CD4-positive, alpha-beta T cell (primary cell): ENCODE measurements at regions of chr13 and their contacts with region 1.

Region 1: DNA sequence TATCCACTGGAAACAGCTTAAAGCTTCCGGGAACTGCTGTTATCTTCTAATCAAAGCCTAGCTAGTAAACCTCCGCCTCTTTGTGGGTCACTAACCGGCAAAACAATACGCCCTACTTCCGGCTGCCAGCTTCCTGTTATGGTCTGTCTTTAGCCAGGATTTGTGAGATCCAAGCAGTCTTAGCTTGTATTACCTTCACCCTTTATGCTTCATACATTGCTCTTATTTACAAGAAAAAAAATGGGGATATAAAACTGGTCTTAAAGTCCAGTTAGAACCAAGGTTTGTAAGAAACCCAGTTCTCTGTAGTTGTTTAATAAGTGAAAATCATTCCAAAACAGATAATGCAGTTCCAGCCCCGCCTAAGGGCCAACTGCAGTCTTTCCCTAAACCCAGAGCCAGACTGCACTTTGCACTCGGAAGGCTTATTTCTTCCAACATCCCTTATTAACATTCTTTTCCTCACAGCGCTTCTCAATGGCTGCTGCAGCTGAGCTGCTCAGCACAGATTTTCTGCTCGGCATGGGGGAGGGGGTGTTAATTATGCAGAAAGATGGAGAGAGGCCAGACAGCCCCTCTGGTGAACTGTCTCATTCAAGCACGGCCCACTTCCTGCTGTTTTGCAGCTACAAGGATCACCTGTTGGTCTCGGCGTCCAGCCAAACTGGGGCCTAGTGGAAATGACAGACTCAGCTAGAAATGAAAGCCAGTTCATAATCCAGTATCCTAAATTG is 368.4 kb downstream of the KLF12 start:
- DNase-seq: peak; percentile 71 to 92 (median 89)
- ATAC-seq: peak; percentile 87
- H3K4me3 ChIP-seq: peak overlapping the region; percentile 33
- H3K4me3 Mint-ChIP-seq: peak overlapping the region; percentile 79
- H3K27ac ChIP-seq: peak overlapping the region; percentile 77 to 83
- H3K27ac Mint-ChIP-seq: peak overlapping the region; percentile 98
- H3K4me1 ChIP-seq: peaks cover 37% of the 10 kb centered on the region
- H3K4me1 Mint-ChIP-seq: peaks cover 82% of the 10 kb centered on the region
- H3K27me3 ChIP-seq: no peaks in the 10 kb centered on the region
- H3K27me3 Mint-ChIP-seq: no peaks in the 10 kb centered on the region
- CTCF ChIP-seq: no peak

Region 2: DNA sequence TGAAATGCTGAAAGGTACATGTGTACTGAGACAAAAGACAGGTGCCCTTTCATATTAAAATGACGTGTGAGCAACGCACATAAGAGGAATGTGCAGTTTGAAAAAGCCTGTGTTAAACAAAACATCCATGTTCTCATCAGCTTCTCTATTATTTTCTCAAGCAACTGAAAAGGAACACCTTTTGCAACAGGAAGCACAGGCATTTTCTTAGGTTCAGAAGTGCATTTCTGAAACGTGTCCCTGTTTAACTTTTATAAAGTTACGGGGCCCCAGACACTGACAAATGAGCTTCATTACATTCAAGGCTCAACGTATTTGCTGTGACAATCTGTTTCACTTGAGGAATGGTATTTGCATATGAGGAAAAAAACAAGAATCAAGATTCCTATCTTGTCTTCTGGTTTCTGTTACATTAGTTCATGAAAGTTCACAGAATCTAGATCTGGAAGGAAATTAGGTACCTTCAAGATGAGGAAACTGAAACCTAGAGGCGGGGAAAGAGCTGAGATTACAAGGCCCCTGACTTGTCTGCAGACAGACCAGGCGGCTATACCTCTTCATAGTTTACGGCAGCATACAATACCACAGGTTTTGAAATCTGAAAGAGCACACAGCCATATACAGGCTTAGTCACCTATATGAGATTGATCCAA is 63.3 kb before region 1 on chr13:
- CTCF ChIA-PET with region 1: no interaction called
- POLR2A ChIA-PET with region 1: interaction called, 13 read pairs
- intact Hi-C with region 1: no loop called
- DNase-seq: peak; percentile 8 to 81 (median 38)
- ATAC-seq: peak; percentile 84
- H3K4me3 ChIP-seq: peak overlapping the region; percentile 40
- H3K4me3 Mint-ChIP-seq: peak overlapping the region; percentile 83
- H3K27ac ChIP-seq: peak overlapping the region; percentile 70 to 76
- H3K27ac Mint-ChIP-seq: peak overlapping the region; percentile 98
- H3K4me1 ChIP-seq: peaks cover 21% of the 10 kb centered on the region
- H3K4me1 Mint-ChIP-seq: peaks cover 53% of the 10 kb centered on the region
- H3K27me3 ChIP-seq: no peaks in the 10 kb centered on the region
- H3K27me3 Mint-ChIP-seq: no peaks in the 10 kb centered on the region
- CTCF ChIP-seq: no peak

Region 3: GRCh38 chr13:73722120-73722519 is 43.7 kb before region 1 on chr13:
- CTCF ChIA-PET with region 1: interaction called, 5 read pairs
- POLR2A ChIA-PET with region 1: interaction called, 25 read pairs
- intact Hi-C with region 1: loop called in 1 of 2 experiments (anchors 5 kb)
- DNase-seq: peak in 3 of 14 experiments; percentile 35 to 52 (median 46)
- ATAC-seq: peak; percentile 71
- H3K4me3 ChIP-seq: no peak overlapping the region
- H3K4me3 Mint-ChIP-seq: no peak overlapping the region
- H3K27ac ChIP-seq: peak overlapping the region in 1 of 2 donors; percentile 10
- H3K27ac Mint-ChIP-seq: peak overlapping the region; percentile 51
- H3K4me1 ChIP-seq: peaks cover 15% of the 10 kb centered on the region
- H3K4me1 Mint-ChIP-seq: peaks cover 62% of the 10 kb centered on the region
- H3K27me3 ChIP-seq: no peaks in the 10 kb centered on the region
- H3K27me3 Mint-ChIP-seq: no peaks in the 10 kb centered on the region
- CTCF ChIP-seq: peak; percentile 14

Region 4: DNA sequence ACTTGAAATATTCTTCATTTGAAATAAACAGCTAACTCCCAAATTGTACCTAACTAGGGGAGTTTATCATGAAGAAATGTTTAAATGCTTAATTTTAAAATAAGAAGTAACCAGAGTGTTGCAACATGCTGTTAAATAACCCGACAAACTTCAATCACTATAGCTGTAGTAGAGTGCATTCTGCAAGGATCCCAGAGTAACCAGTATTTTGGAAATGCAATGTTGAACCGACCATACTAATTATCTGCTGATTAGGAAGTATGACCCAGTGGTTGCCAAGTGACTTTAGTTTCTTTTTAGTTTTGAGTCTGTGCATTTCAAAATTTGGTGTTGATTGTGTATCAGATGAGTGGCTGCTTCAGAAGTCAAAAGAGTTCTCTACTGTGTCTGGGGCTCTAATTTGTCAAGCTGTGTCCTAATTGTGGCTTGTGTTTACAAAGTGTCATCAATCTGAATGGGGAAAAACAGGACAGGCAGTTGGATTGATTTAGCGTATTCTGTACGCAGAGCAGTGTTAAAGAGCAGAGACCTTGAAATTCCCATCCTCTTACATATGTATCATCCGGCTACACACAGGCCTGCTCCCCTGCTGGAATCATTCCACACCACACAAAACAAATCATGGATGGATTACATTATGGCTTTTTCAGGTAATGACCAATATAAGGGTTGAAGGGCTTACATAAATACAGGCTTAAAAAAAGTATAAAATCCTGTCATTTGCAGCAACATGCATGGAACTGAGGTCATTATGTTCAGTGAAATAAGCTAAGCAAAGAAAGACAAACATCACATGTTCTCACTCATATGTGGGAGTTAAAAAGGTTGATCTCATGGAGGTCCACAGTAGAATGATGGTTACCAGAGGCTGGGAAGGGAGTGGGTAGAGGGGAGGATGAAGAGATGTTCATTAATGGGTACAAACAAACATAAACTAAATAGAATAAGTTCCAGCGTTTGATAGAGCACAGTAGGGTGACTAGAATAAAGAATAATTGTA is 16.9 kb after region 1 on chr13:
- CTCF ChIA-PET with region 1: interaction called, 5 read pairs
- POLR2A ChIA-PET with region 1: interaction called, 11 read pairs
- intact Hi-C with region 1: loop called in 1 of 2 experiments (anchors 2 kb)
- DNase-seq: no peak
- ATAC-seq: no peak
- H3K4me3 ChIP-seq: no peak overlapping the region
- H3K4me3 Mint-ChIP-seq: no peak overlapping the region
- H3K27ac ChIP-seq: no peak overlapping the region
- H3K27ac Mint-ChIP-seq: peak overlapping the region; percentile 10
- H3K4me1 ChIP-seq: no peaks in the 10 kb centered on the region
- H3K4me1 Mint-ChIP-seq: peaks cover 45% of the 10 kb centered on the region
- H3K27me3 ChIP-seq: no peaks in the 10 kb centered on the region
- H3K27me3 Mint-ChIP-seq: no peaks in the 10 kb centered on the region
- CTCF ChIP-seq: no peak

Region 5: GRCh38 chr13:73984949-73985691 is 219.3 kb after region 1 on chr13:
- CTCF ChIA-PET with region 1: no interaction called
- POLR2A ChIA-PET with region 1: interaction called, 13 read pairs
- intact Hi-C with region 1: no loop called
- DNase-seq: peak; percentile 64 to 94 (median 78)
- ATAC-seq: peak; percentile 90
- H3K4me3 ChIP-seq: peak overlapping the region; percentile 25
- H3K4me3 Mint-ChIP-seq: peak overlapping the region; percentile 85
- H3K27ac ChIP-seq: peak overlapping the region; percentile 42 to 61
- H3K27ac Mint-ChIP-seq: no peak overlapping the region
- H3K4me1 ChIP-seq: peaks cover 33% of the 10 kb centered on the region
- H3K4me1 Mint-ChIP-seq: peaks cover 50% of the 10 kb centered on the region
- H3K27me3 ChIP-seq: no peaks in the 10 kb centered on the region
- H3K27me3 Mint-ChIP-seq: no peaks in the 10 kb centered on the region
- CTCF ChIP-seq: no peak

Region 6: GRCh38 chr13:74230984-74231501 is 465.2 kb after region 1 on chr13:
- CTCF ChIA-PET with region 1: interaction called, 4 read pairs
- POLR2A ChIA-PET with region 1: interaction called, 3 read pairs
- intact Hi-C with region 1: loop called in 1 of 2 experiments (anchors 5 kb)
- DNase-seq: peak in 4 of 14 experiments; percentile 14 to 79 (median 52)
- ATAC-seq: peak; percentile 88
- H3K4me3 ChIP-seq: peak overlapping the region; percentile 56
- H3K4me3 Mint-ChIP-seq: peak overlapping the region; percentile 79
- H3K27ac ChIP-seq: peak overlapping the region; percentile 15 to 38
- H3K27ac Mint-ChIP-seq: peak overlapping the region; percentile 90
- H3K4me1 ChIP-seq: peaks cover 17% of the 10 kb centered on the region
- H3K4me1 Mint-ChIP-seq: peaks cover 51% of the 10 kb centered on the region
- H3K27me3 ChIP-seq: no peaks in the 10 kb centered on the region
- H3K27me3 Mint-ChIP-seq: no peaks in the 10 kb centered on the region
- CTCF ChIP-seq: no peak

Region 7: DNA sequence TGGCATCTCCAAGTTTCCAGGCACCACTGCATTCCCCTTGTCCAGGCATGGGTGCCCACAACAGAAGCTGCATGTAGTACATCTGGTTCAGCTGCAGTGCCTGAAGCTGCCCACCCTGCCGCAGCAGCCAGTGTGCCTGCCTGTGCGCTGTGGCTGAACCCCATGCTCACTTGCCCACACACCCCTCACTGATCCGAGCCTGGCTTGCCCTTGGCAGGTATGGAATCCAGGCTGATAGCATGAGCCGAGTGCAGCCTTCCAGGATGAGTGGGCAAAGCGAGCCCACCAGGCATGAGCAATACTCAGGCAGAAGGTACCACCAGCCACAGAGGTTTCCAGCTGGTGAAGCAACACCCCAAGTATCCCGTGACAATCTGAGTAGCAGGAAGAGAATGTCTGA is 648.6 kb after region 1 on chr13:
- CTCF ChIA-PET with region 1: no interaction called
- POLR2A ChIA-PET with region 1: no interaction called
- intact Hi-C with region 1: no loop called
- DNase-seq: no peak
- ATAC-seq: no peak
- H3K4me3 ChIP-seq: no peak overlapping the region
- H3K4me3 Mint-ChIP-seq: no peak overlapping the region
- H3K27ac ChIP-seq: no peak overlapping the region
- H3K27ac Mint-ChIP-seq: no peak overlapping the region
- H3K4me1 ChIP-seq: no peaks in the 10 kb centered on the region
- H3K4me1 Mint-ChIP-seq: no peaks in the 10 kb centered on the region
- H3K27me3 ChIP-seq: no peaks in the 10 kb centered on the region
- H3K27me3 Mint-ChIP-seq: no peaks in the 10 kb centered on the region
- CTCF ChIP-seq: no peak

Region 8: DNA sequence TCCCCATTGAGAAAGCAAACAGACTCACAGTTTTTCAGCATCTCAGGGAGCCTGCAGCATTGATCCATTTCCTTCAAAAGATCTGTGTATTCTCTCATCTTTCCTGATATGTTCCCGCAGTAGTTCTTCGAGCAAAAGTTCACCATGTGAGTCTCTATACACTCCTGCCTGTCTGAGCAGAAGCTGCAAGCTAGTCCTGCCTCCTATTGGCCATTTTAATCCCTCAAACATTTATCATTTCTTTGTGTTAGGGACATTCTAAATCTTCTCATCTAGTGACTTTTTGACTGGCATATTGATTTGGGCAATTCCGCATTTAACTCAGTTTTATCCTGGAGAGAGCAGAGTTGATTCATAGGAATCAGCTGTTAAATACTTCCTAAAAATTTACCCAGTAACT is 1028.8 kb after region 1 on chr13:
- CTCF ChIA-PET with region 1: no interaction called
- POLR2A ChIA-PET with region 1: no interaction called
- intact Hi-C with region 1: no loop called
- DNase-seq: no peak
- ATAC-seq: no peak
- H3K4me3 ChIP-seq: no peak overlapping the region
- H3K4me3 Mint-ChIP-seq: no peak overlapping the region
- H3K27ac ChIP-seq: no peak overlapping the region
- H3K27ac Mint-ChIP-seq: no peak overlapping the region
- H3K4me1 ChIP-seq: no peaks in the 10 kb centered on the region
- H3K4me1 Mint-ChIP-seq: no peaks in the 10 kb centered on the region
- H3K27me3 ChIP-seq: peaks cover 0 to 7% of the 10 kb centered on the region in 2 experiments
- H3K27me3 Mint-ChIP-seq: peaks cover 24% of the 10 kb centered on the region
- CTCF ChIP-seq: no peak